Activated CD4-positive, alpha-beta memory T cell treated with anti-CD3 and anti-CD28 coated beads for 36 hours (primary cell): ENCODE measurements at regions of chr16 and their contacts with region 1.

Region 1: DNA sequence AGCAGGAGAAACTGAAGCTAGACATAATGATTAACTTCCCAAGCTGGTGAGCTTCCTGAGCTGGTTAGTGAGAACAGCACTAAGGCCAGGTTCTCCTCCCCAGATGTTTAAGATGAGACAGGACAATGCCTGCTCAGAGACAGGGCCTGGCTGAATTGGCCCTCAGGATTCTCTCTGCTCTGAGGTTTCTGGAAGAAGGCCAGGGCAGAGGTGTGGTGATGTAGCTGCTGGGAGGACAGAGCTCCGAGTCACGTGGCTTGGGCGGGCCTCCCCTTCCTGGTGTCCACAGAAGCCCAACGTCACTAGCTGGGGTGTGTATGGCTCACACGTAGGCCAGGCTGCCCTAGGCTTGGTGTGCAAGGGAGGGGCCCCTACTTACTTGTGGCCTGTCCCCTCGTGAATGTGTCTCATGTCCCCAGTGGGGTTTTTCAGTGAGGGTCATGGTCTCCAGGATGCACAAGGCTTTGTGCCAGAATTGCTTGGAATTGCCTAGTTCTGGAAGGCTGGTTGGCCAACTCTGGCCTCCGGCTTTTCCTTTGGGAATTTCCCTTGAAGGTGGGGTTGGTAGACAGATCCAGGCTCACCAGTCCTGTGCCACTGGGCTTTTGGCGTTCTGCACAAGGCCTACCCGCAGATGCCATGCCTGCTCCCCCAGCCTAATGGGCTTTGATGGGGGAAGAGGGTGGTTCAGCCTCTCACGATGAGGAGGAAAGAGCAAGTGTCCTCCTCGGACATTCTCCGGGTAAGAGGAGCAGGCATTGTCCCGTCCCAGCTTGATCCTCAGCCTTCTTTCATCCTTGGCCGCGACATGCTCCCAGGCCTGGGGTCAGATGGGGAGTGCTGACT is 3.4 kb downstream of the NOD2 start:
- DNase-seq: peak; percentile 90
- H3K4me3 Mint-ChIP-seq: peak overlapping the region; percentile 78
- H3K27ac Mint-ChIP-seq: peak overlapping the region; percentile 98
- H3K4me1 Mint-ChIP-seq: peaks cover 89% of the 10 kb centered on the region
- H3K27me3 Mint-ChIP-seq: no peaks in the 10 kb centered on the region

Region 2: DNA sequence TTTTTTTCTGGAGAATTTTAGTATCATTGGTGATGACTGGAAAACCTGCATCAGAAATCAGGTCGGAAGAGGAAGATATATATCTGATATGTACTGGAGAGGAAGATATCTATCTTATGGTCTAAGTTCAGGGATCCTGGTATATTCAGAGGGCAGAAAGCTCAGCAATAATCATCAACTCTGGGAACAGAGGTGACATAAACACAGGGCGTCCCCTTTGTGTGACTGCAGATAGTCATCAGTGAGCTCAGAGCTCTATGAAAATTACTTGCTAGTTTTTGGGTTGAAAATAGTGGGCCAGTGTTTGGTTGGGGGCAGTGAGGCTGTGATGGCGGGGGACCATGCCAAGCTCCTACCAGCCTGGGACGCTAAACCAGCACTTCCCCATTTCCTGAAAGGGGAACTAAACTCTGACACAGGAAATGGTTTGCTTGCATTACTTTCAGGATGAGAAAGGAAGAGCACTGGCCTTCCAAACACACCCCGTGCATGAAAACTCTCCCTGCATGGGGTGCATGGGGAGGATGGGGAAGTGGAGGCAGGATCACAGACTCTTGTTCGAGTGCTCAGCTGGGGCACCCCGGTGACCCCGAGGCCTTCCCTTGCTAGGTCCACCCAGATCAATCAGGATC is 12.4 kb after region 1 on chr16:
- CTCF ChIA-PET with region 1: no interaction called
- POLR2A ChIA-PET with region 1: interaction called, 21 read pairs
- intact Hi-C with region 1: loop called (anchors 1 kb)
- DNase-seq: peak; percentile 34
- H3K4me3 Mint-ChIP-seq: peak overlapping the region; percentile 24
- H3K27ac Mint-ChIP-seq: peak overlapping the region; percentile 94
- H3K4me1 Mint-ChIP-seq: peaks cover 61% of the 10 kb centered on the region
- H3K27me3 Mint-ChIP-seq: no peaks in the 10 kb centered on the region